PC-3 (cell line): ENCODE measurements at regions of chr2 and their contacts with region 1.

Region 1: GRCh38 chr2:15560988-15561573 is at the start of gene NBAS:
- DNase-seq: peak; percentile 86
- ATAC-seq: peak; percentile 75
- H3K4me3 ChIP-seq: peak within 1 kb of the TSS; percentile 98
- H3K27ac ChIP-seq: no peak within 1 kb of the TSS; the same call in 1 of the 2 replicates
- H3K4me1 ChIP-seq: peaks cover 18% of the 10 kb centered on the region; the same call in 1 of the 2 replicates
- H3K27me3 ChIP-seq: no peaks in the 10 kb centered on the region
- CTCF ChIP-seq: no peak
- total RNA-seq, gene NBAS: 37.2 and 45.1 TPM in 2 replicates

Region 2: DNA sequence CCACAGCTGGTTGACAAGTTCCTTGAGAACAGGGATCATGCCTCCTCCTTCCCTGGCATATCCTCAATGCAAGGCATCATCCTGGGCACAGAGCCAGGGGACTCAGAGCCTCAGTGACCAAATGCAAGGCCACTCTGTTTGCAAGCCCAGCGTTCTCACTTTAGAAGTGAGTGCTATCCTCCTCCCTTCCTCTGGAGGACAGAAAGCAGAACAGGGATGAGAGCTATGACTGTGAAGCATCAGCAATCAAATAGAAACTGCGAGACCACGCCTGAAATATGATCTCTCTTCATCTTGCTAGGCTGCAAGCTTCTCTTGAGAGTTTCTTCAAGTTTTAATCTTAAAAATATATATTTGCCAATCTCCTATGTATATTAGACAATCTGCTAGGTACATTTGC is 808.8 kb before region 1 on chr2:
- CTCF ChIA-PET with region 1: no interaction called
- POLR2A ChIA-PET with region 1: interaction called, 11 read pairs
- intact Hi-C with region 1: no loop called
- DNase-seq: peak; percentile 63
- ATAC-seq: peak; percentile 14; the same call in 1 of the 2 replicates
- H3K4me3 ChIP-seq: no peak overlapping the region; the same call in 1 of the 2 replicates
- H3K27ac ChIP-seq: peak overlapping the region; percentile 92
- H3K4me1 ChIP-seq: peaks cover 60% of the 10 kb centered on the region
- H3K27me3 ChIP-seq: no peaks in the 10 kb centered on the region
- CTCF ChIP-seq: no peak

Region 3: GRCh38 chr2:15636972-15637785 is 76.1 kb after region 1 on chr2:
- CTCF ChIA-PET with region 1: no interaction called
- POLR2A ChIA-PET with region 1: no interaction called
- intact Hi-C with region 1: no loop called
- DNase-seq: peak; percentile 58
- ATAC-seq: peak; percentile 57
- H3K4me3 ChIP-seq: no peak overlapping the region
- H3K27ac ChIP-seq: no peak overlapping the region
- H3K4me1 ChIP-seq: peaks cover 11% of the 10 kb centered on the region
- H3K27me3 ChIP-seq: no peaks in the 10 kb centered on the region
- CTCF ChIP-seq: peak; percentile 95